ENCODE measurements at regions of chr16 and their contacts with region 1.

Region 1: GRCh38 chr16:86519649-86520316 is 9.5 kb downstream of the FOXF1 start:
- DNase-seq: peak in 40 of 42 donors; percentile 33 to 85 (median 62)

Region 2: GRCh38 chr16:85821441-85822135 is 698.2 kb before region 1 on chr16:
- intact Hi-C with region 1: loop called (anchors 10 kb)
- DNase-seq: peak; percentile 69 to 91 (median 83)

Region 3: GRCh38 chr16:86072328-86073102 is 447.3 kb before region 1 on chr16:
- intact Hi-C with region 1: loop called (anchors 5 kb)
- DNase-seq: peak; percentile 38 to 89 (median 72)

Region 4: DNA sequence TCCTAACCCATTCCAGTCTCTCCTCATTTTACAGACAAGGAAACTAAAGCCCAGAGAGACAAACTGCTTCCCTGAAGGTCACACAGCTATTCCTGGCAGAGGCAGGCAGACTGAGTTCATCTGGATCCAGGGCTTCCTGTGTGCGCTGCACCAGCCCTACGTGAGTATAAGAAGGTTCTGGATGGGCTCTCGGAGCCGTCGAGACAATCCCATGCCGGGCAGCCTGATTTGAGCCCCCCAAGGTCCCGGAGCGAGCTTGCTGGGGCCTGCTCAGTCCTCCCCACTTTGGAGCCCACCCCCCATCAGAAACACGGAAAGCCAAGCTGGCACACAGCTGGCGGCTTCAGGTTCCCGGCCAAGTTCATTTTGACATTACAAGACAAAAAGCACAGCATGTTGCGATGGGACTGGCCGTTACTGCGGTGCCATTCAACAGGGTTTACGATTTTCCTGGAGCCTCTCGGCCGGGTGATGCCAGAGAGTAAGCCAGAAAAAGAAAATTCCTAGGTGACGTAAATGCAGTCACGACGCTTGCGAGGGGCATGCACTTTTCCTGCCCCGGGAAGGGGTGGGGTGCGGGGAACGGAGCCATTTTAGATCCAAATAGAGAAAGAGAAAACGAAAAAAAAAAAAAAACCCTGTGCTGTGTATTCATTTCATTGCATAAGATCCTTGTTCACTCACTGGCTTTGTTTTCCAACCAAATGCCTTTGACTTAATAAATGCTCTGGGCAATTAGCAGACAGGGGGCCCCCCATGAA is 176.6 kb before region 1 on chr16:
- intact Hi-C with region 1: loop called (anchors 2 kb)
- DNase-seq: peak in 4 of 42 donors; percentile 4 to 31 (median 5)

Region 5: DNA sequence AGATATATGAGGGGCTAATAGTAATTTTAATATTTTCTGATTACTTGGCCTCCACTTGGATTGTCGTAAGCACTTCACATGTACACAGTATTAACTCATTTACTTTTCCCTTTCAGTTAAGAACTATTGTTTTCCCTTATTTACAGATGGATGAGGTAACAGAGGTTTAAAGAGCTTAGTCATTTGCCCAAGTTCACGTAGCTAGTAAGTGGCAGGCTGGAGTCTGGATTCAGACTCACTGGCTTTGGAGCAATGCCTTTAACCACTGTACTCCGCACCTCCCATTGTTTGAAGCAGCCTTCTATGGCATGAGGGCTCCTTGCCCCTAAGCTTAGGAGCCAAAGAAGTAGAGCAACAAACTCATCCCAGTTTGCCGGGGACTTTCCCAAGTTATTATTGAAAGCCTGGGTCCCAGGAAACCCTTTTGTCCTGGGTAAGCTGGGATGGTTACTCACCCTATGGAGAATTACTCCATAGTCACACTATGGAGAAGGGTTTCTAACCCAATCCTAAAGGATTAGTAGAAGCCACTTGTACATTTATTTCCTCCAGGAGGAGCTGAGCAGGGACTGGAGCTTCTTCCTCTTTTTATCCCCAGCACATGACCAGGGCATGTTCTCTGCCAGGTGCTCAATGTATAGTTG is 70.8 kb after region 1 on chr16:
- intact Hi-C with region 1: no loop called
- DNase-seq: no peak